ENCODE measurements at regions of chr2 and their contacts with region 1.

Region 1: GRCh38 chr2:73999881-74000597 is 15.3 kb downstream of the TET3 start:
- DNase-seq: peak; percentile 54
- H3K4me3 ChIP-seq: no peak overlapping the region
- H3K27ac ChIP-seq: no peak overlapping the region
- H3K4me1 ChIP-seq: peaks cover 12% of the 10 kb centered on the region
- H3K27me3 ChIP-seq: no peaks in the 10 kb centered on the region
- CTCF ChIP-seq: no peak
- POLR2A ChIP-seq: no peak

Region 2: GRCh38 chr2:73939419-73939818 is 60.6 kb before region 1 on chr2:
- intact Hi-C with region 1: loop called (anchors 5 kb)
- DNase-seq: peak; percentile 33
- H3K4me3 ChIP-seq: no peak overlapping the region
- H3K27ac ChIP-seq: no peak overlapping the region
- H3K4me1 ChIP-seq: no peaks in the 10 kb centered on the region
- H3K27me3 ChIP-seq: no peaks in the 10 kb centered on the region
- CTCF ChIP-seq: peak in 2 of 4 experiments; percentile 35 to 48
- POLR2A ChIP-seq: no peak

Region 3: DNA sequence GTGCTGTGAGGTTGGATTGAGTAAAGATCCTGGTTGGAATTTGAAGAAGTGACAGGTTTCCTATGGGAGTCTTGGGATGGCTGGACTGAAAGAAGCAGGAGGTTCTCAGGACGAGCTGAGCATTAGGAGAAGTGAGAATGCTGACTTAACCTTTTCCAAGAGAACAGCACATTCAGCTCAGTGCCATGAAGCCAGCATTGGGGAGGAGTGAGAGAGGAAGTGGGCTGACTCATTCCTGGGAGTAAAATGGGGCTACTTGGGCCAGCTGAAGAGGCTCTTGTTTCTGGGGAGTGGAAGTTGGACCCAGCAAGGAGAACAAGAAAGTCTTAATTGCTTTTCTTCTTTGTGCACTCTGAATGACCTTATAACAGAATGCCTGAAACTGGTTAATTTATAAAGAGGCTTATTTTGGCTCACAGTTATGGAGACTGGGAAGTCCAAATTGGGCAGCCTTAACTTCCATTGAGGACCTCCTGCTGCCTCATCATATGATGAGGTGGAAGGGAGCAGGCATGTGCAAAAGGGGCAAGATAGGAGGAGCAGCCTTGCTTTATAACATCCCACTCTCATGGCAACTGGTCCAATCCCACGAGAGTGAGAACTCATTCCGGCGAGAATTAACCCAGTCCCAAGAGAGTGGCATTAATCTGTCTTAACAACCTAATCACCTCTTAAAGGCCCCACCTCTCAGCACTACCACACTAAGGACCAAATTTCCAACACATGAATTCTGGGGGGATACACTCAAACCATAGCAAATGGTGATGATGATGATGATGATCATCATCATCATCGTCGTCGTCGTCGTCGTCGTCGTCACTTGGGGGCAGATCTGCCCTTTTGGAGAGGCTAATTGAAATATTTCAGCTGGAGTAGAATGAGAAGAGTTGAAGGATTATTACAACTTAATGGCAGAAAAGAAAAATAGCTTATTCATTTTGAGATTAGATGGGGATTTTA is 47.3 kb before region 1 on chr2:
- intact Hi-C with region 1: no loop called
- DNase-seq: no peak
- H3K4me3 ChIP-seq: no peak overlapping the region
- H3K27ac ChIP-seq: no peak overlapping the region
- H3K4me1 ChIP-seq: no peaks in the 10 kb centered on the region
- H3K27me3 ChIP-seq: no peaks in the 10 kb centered on the region
- CTCF ChIP-seq: no peak
- POLR2A ChIP-seq: no peak